ENCODE measurements at regions of chr15 and their contacts with region 1.

Region 1: DNA sequence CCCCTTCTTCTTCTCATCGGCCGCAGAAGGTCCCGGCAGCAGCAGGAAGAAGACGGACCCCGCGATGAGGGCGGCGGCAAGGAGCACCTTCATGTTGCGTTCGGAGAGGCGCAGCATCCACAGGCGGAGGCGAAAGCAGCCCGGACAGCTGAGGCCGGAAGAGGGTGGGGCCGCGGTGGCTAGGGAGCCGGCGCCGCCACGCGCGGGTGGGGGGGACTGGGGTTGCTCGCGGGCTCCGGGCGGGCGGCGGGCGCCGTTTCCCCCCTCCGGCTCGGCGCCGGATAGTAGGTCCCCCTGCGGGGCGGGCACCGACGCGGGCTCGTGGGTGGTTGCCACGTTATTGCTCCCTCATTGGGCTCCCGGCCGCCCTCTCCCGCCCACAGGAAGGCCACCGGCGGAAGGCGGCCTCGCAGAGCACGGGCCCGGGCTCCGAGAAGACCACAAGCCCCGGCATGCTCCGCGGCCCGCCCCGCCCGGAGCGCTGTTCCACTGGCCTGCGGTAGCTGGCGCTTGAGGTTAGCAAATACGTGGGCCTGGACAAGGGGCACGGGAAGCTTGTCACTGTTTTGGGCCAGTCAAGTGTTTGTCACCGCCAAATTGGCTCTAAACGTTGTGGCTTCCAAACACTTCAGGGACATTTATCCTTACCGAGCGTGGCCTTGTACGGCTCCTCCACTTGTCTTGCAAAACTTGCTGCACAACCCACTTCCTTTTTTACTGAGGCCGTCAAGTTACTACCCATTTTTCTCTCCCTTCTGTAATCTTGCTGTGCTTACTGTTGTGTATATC is at the start of gene PPIB:
- DNase-seq: peak; percentile 91 to 98 (median 96)
- ATAC-seq: peak; percentile 92
- H3K4me3 ChIP-seq: peak within 1 kb of the TSS; percentile 77
- H3K4me3 Mint-ChIP-seq: peak within 1 kb of the TSS; percentile 89
- H3K27ac ChIP-seq: peak within 1 kb of the TSS; percentile 77 to 80
- H3K27ac Mint-ChIP-seq: peak within 1 kb of the TSS; percentile 87
- H3K4me1 ChIP-seq: peaks cover 57% of the 10 kb centered on the region
- H3K4me1 Mint-ChIP-seq: peaks cover 48% of the 10 kb centered on the region
- H3K27me3 ChIP-seq: no peaks in the 10 kb centered on the region
- H3K27me3 Mint-ChIP-seq: no peaks in the 10 kb centered on the region
- CTCF ChIP-seq: peak; percentile 42
- total RNA-seq, gene PPIB: 167 to 169 TPM

Region 2: GRCh38 chr15:63833021-63833696 is 329.9 kb before region 1 on chr15:
- CTCF ChIA-PET with region 1: no interaction called
- POLR2A ChIA-PET with region 1: no interaction called
- intact Hi-C with region 1: loop called in 1 of 2 experiments (anchors 5 kb)
- DNase-seq: peak; percentile 7 to 46 (median 19)
- ATAC-seq: peak; percentile 21
- H3K4me3 ChIP-seq: peak overlapping the region; percentile 92
- H3K4me3 Mint-ChIP-seq: peak overlapping the region; percentile 98
- H3K27ac ChIP-seq: peak overlapping the region; percentile 63 to 93
- H3K27ac Mint-ChIP-seq: peak overlapping the region; percentile 99
- H3K4me1 ChIP-seq: peaks cover 23% of the 10 kb centered on the region
- H3K4me1 Mint-ChIP-seq: peaks cover 67% of the 10 kb centered on the region
- H3K27me3 ChIP-seq: no peaks in the 10 kb centered on the region
- H3K27me3 Mint-ChIP-seq: no peaks in the 10 kb centered on the region
- CTCF ChIP-seq: no peak

Region 3: DNA sequence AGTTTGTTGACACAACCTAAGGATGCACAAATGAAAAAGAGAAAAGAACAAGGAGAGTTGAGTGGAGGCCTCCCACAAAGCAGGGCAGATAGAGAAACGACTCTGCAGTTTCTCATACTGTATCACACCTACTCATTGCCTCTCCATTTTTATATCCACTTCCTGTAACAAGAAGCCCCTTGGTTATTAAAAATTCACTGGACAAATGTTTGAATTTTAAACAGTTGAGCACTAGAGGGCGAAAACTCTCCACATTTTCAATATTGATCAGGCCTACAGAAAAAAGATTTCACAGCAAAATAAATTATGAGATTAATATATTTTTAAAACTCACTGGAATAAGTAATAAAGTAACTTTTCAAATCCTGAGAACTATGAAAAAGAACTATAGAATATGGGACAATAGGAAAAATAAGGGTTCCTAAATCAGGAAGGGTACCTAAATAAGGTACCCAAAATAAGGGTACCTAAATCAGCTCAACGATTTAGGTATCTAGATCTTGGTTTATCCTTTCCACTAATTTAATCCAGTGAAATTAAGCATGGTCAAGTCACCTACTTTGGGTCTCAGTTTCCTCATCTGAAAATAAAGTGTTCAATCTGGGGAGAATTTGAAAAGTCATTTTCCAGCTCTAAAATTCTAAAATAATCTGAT is 46.7 kb after region 1 on chr15:
- CTCF ChIA-PET with region 1: no interaction called
- POLR2A ChIA-PET with region 1: no interaction called
- intact Hi-C with region 1: no loop called
- DNase-seq: peak in 3 of 14 experiments; percentile 19 to 27 (median 27)
- ATAC-seq: no peak
- H3K4me3 ChIP-seq: no peak overlapping the region
- H3K4me3 Mint-ChIP-seq: no peak overlapping the region
- H3K27ac ChIP-seq: no peak overlapping the region
- H3K27ac Mint-ChIP-seq: peak overlapping the region; percentile 7
- H3K4me1 ChIP-seq: no peaks in the 10 kb centered on the region
- H3K4me1 Mint-ChIP-seq: no peaks in the 10 kb centered on the region
- H3K27me3 ChIP-seq: no peaks in the 10 kb centered on the region
- H3K27me3 Mint-ChIP-seq: no peaks in the 10 kb centered on the region
- CTCF ChIP-seq: peak; percentile 43

Region 4: DNA sequence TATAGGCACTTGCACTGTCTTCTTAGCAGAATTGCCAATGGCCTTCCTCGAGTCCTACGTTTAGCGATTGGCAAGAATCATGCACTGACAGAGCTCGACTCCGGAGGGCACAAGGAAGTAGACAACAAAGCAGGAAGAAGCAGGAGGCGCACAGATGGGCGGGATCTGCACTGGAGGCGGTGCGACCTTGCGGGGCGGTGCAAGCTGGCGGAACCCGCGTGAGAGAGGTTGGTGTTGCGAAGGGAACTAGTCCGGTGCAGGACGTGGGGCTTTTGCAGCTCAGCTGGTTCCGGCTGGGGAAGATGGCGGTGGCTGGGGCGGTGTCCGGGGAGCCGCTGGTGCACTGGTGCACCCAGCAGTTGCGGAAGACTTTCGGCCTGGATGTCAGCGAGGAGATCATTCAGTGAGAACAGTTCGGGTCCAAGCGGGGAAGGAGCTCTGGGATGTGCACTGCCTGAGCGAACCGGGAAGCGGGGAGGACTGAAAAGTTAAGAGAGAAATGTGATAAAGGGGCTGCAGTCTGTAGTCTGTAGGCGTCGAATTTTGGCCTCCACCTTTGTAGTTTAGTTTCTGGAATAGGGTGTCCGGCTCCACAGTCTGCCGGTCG is 224.6 kb after region 1 on chr15 and contains the start of gene TRIP4:
- CTCF ChIA-PET with region 1: interaction called, 4 read pairs
- POLR2A ChIA-PET with region 1: interaction called, 27 read pairs
- intact Hi-C with region 1: loop called (anchors 2 kb)
- DNase-seq: peak; percentile 94 to 98 (median 96)
- ATAC-seq: peak; percentile 99
- H3K4me3 ChIP-seq: peak within 1 kb of the TSS; percentile 76
- H3K4me3 Mint-ChIP-seq: peak within 1 kb of the TSS; percentile 98
- H3K27ac ChIP-seq: peak within 1 kb of the TSS in 1 of 2 donors; percentile 8
- H3K27ac Mint-ChIP-seq: peak within 1 kb of the TSS; percentile 81
- H3K4me1 ChIP-seq: peaks cover 26% of the 10 kb centered on the region
- H3K4me1 Mint-ChIP-seq: peaks cover 18% of the 10 kb centered on the region
- H3K27me3 ChIP-seq: no peaks in the 10 kb centered on the region
- H3K27me3 Mint-ChIP-seq: no peaks in the 10 kb centered on the region
- CTCF ChIP-seq: no peak
- total RNA-seq, gene TRIP4: 9.6 to 10.7 TPM

Region 5: DNA sequence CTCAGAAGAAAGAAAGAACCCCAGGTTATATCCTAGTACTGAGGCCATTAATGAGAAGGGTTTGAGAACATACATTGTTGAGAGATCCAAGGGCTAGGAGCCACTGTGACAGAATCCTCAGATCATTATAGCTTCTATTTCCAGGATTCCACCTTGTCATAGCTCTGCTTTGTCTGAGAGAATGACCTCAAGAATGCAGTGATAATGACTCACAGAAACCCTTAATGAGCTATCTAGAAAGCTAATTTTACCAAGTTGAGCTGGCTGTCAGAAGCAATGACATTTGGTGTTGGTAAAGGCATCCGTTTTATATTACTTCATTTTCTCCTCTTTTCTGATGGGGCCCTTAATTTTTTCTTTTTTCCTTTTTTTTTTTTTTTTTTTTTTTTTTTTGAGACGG is 235.5 kb after region 1 on chr15:
- CTCF ChIA-PET with region 1: no interaction called
- POLR2A ChIA-PET with region 1: no interaction called
- intact Hi-C with region 1: no loop called
- DNase-seq: no peak
- ATAC-seq: no peak
- H3K4me3 ChIP-seq: no peak overlapping the region
- H3K4me3 Mint-ChIP-seq: no peak overlapping the region
- H3K27ac ChIP-seq: no peak overlapping the region
- H3K27ac Mint-ChIP-seq: no peak overlapping the region
- H3K4me1 ChIP-seq: no peaks in the 10 kb centered on the region
- H3K4me1 Mint-ChIP-seq: peaks cover 4% of the 10 kb centered on the region
- H3K27me3 ChIP-seq: no peaks in the 10 kb centered on the region
- H3K27me3 Mint-ChIP-seq: no peaks in the 10 kb centered on the region
- CTCF ChIP-seq: no peak

Region 6: GRCh38 chr15:64825431-64826294 is 662.6 kb after region 1 on chr15 and contains the start of gene PIF1:
- CTCF ChIA-PET with region 1: no interaction called
- POLR2A ChIA-PET with region 1: no interaction called
- intact Hi-C with region 1: loop called in 1 of 2 experiments (anchors 10 kb)
- DNase-seq: peak; percentile 72 to 97 (median 81)
- ATAC-seq: peak; percentile 98
- H3K4me3 ChIP-seq: peak within 1 kb of the TSS; percentile 61
- H3K4me3 Mint-ChIP-seq: peak within 1 kb of the TSS; percentile 86
- H3K27ac ChIP-seq: peak within 1 kb of the TSS in 1 of 2 donors; percentile 9
- H3K27ac Mint-ChIP-seq: peak within 1 kb of the TSS; percentile 61
- H3K4me1 ChIP-seq: peaks cover 37% of the 10 kb centered on the region
- H3K4me1 Mint-ChIP-seq: peaks cover 31% of the 10 kb centered on the region
- H3K27me3 ChIP-seq: peaks cover 5 to 7% of the 10 kb centered on the region in 2 experiments
- H3K27me3 Mint-ChIP-seq: peaks cover 17% of the 10 kb centered on the region
- CTCF ChIP-seq: no peak
- total RNA-seq, gene PIF1: 0.22 to 0.27 TPM

Region 7: GRCh38 chr15:65133548-65134200 is 970.6 kb after region 1 on chr15 and contains the start of gene PDCD7:
- CTCF ChIA-PET with region 1: no interaction called
- POLR2A ChIA-PET with region 1: no interaction called
- intact Hi-C with region 1: loop called in 1 of 2 experiments (anchors 2 kb)
- DNase-seq: peak; percentile 68 to 95 (median 78)
- ATAC-seq: peak; percentile 95
- H3K4me3 ChIP-seq: peak within 1 kb of the TSS; percentile 66
- H3K4me3 Mint-ChIP-seq: peak within 1 kb of the TSS; percentile 95
- H3K27ac ChIP-seq: peak within 1 kb of the TSS; percentile 73 to 87
- H3K27ac Mint-ChIP-seq: peak within 1 kb of the TSS; percentile 92
- H3K4me1 ChIP-seq: peaks cover 26% of the 10 kb centered on the region
- H3K4me1 Mint-ChIP-seq: peaks cover 32% of the 10 kb centered on the region
- H3K27me3 ChIP-seq: no peaks in the 10 kb centered on the region
- H3K27me3 Mint-ChIP-seq: no peaks in the 10 kb centered on the region
- CTCF ChIP-seq: no peak
- total RNA-seq, gene PDCD7: 15.6 to 17.7 TPM

Measured in CD4-positive, alpha-beta T cell (primary cell).